Posterior cingulate gyrus (tissue), 11 donors: ENCODE measurements at regions of chr11 and their contacts with region 1.

Region 1: DNA sequence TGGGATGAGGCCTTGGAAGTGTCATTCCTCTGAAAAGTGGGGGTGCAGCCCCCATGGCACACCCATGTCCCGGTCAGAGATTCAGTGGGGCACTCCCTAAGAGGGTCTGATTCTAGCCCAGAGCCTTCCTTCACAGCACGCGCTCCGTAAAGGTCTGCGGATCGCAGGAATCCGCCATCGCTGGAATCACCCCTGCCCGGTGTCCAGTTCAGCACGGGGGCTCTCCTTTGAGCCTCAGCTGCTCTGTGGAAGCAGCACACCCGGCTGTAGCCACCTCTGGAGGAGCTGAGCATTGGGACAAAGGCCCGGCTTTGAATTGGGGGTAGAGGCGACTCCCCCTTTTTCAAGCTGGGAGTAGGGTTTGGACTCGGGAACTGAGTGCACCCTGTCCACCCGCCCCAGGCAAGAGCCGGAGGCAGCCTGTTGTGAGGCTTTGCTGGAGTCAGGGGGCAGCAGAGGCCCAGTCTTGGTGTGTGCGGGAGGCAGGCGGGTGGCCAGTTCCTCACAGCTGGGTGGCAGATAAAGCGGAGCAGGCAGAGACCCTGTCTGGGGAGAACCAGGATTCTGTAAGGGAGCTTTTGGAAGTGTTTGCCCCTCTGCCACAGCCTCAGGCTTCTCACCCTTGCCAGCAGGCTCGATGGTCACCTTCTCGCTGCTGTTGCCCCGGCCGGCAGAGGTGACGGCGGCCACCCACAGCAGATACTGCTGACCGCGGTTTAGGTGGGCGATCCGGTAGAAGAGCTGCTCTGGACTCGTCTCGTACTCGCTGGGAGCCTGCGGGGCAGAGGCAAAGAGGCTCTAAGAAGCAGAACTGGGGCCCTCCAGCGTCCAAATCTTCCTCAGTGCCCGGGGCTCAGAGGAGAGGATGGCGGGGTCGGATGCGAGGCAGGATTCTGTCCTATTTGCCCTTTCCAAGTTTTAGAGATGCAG is 115.9 kb downstream of the CEP164 start:
- DNase-seq: peak; percentile 58 to 97 (median 77)

Region 2: DNA sequence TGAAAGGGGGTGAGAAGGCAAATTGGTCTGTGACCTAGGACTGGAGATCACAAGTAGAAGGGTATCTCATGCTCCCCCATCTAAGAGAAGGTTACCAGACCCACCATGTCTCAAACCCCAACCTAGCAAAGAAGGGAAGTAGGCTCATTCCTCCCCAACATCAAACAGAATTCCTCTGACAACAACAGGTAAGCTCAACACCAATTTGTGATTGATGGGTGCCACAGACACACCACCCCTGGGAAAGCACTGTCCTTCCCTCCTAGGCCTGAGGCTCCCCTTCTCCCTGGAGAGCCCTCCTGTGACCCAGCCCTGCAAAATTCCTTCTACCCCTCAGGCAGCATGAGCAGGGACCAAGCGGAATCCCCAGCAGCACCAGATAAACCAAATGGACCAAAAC is 825.1 kb before region 1 on chr11:
- intact Hi-C with region 1: no loop called
- DNase-seq: no peak

Region 3: DNA sequence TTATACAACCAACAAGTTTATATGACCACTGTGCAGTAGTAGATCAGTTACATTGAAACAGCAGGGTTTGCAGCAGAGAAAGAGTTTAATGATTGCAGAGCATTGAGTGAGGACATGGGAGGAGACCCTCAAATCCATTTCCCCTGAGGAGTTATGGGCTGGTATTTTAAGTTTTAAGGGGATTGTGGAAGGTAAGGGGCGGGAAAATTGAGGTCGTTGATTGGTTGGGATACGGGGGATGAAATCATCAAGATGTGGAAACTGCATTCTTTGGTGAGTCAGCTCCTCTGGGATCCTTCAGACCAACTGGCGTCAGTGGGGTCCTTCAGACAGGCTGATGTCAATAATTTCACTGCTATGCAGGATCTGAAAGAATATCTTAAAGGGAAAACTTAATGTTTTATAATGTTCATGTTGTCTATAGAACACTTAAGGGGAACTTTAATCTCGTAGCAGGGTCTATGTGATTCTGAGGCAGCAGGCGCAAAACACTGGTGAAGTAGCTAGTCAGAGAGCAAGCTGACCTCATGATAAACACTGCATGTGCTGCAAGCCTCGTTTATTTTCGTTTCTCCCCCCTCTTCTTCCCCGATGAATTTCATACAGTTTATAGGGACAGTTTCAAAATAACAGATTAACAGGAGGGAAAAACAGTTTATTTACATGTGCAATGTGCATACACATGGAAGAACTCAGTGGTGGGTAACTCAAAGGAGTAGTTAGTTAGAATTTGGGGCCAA is 169.8 kb before region 1 on chr11:
- intact Hi-C with region 1: no loop called
- DNase-seq: no peak

Region 4: DNA sequence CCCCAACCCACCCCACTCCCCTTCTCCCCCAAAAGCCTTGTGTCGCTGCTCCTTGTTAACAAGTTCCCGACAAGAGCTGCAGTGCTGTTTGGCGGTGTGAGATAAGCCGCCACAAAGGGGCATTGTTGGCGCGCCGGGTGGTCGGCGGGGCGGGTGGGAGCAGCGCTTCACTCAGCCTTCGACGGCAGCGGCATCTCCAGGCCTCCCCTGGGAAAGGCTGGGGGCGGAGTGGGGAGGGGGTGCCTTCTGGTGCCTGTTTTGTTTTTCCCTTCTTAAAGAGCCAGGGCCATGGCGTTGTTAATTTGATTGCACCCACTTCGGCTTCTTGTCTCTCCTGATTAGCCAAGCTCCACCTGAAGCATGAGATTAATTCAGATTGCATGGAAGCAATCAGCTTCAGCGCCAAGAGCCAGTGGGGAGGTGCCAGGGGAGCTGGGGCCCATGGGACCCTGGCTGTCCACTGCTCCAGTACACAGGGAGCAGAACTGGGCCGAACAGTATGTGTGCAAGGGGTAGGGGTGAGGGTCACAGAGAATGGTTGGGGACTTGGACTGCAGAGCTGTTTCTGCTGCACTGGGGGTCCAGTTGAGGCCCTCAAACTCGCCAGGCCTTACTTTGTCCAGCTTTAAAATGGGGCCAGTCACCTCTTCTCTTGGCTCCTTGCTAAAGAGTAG is 49.2 kb after region 1 on chr11:
- intact Hi-C with region 1: no loop called
- DNase-seq: peak in 2 of 10 donors; percentile 38 to 82

Region 5: DNA sequence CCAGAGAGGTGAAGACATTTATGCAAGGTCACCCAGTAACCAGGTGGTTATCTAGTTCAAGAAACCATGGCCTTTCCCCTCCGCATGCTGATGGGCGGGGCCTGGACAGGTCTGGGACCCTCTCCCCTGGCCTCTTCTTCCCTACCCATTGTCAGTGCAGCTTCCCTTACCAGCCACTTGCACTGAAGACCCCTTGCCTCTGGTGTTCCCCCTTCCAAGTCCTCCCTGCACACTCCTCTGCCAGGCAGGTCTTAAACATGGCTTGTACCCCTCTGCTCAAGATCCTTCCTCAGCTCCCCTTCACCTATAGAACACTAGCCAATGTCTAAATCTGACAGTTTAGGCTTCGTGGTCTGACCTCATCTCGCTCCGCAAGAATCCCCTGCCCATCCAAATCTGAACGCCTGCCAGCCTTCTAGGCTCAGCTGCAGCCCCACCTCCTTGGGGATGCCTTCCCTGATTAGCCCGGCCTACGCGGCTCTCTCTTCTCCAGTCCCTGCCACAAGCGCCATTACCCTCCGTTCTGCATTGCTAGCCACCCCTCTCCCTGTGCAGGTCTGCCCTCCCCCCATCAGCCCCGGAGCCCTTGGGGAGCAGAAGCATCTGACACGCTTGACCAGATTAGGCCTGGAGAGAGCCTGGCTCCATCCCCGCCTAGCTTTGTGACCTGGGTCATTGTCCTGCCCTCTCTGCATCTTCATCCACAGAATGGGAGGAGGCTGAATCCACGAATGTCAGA is 139.7 kb after region 1 on chr11:
- intact Hi-C with region 1: no loop called
- DNase-seq: peak in 5 of 10 donors; percentile 45 to 94 (median 46)

Region 6: GRCh38 chr11:117807482-117808327 is 364.2 kb after region 1 on chr11:
- intact Hi-C with region 1: loop called (anchors 5 kb)
- DNase-seq: peak; percentile 63 to 96 (median 86)